AG04449 (cell line): ENCODE measurements at regions of chr17 and their contacts with region 1.

Region 1: DNA sequence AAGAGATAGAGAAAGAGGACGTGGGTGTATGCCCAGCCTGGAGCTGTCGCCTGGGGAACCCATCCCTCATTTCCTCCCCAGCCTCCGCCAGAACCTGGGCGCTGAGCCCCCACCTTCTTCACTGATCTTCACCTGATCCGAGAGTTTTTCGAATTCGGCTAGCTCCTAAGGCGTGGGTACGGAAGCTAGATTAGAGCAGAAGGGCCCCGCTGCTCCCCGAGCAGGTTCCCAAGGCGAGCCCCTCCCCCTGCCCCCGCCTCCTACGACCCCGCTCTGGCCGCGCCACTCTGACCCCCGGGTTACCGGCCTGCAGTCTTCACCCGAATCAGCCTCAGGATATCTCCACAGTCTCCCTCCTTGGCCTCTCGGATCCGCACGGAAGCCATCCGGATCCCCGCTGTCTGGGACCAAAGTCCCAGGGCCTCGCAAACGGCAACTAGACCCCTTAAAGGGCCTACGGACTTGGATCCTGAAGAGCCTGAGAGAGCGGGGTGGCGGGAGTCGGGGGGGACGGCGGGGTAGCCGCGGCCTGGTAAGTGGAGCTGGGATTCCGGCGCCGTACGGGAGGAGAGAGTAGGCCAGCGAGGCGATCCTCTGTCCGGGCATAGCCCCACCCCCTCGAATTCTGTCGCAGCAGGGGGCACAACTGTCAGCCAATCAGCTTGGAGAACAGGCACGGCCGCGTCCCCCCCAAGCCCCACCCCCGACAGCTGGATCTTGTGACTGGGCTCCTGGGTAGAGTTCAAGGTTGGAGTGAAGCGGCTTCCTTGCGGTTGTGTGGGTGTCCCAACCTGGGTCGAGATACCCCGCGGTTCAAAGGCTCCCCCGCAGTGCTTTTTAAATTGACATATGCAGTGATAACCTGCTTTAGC is at the start of gene SAT2:
- DNase-seq: peak; percentile 52
- H3K4me3 ChIP-seq: peak within 1 kb of the TSS; percentile 65
- CTCF ChIP-seq: no peak

Region 2: GRCh38 chr17:7614422-7615264 is 12.8 kb before region 1 on chr17 and contains the start of gene FXR2:
- CTCF ChIA-PET with region 1: interaction called, 67 read pairs
- POLR2A ChIA-PET with region 1: interaction called, 14 read pairs
- DNase-seq: peak; percentile 99
- H3K4me3 ChIP-seq: peak within 1 kb of the TSS; percentile 87
- CTCF ChIP-seq: peak; percentile 74

Region 3: GRCh38 chr17:7732981-7733539 is 105.6 kb after region 1 on chr17:
- CTCF ChIA-PET with region 1: no interaction called
- POLR2A ChIA-PET with region 1: no interaction called
- DNase-seq: no peak
- H3K4me3 ChIP-seq: no peak overlapping the region
- CTCF ChIP-seq: no peak